ENCODE measurements at regions of chr6 and their contacts with region 1.

Region 1: DNA sequence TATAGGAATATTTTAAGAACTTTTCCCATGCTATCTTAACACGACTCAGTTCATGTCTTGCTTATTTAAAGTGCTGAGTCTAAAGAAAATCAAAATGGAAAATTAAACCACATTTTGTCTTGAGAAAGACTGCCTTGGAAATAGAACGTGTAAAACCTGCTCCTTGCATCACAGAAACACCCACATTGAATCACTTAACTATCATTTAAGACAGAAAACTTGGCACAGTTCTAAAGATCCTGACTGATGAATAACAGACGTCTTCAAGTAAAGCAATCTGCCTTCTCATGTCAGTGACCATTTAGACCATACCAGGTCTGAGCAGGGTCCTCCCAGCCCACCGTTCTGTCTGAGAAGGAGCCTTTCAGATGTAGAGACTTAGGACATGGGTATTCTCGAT is 7.4 kb downstream of the PERP start:
- DNase-seq: no peak

Region 2: DNA sequence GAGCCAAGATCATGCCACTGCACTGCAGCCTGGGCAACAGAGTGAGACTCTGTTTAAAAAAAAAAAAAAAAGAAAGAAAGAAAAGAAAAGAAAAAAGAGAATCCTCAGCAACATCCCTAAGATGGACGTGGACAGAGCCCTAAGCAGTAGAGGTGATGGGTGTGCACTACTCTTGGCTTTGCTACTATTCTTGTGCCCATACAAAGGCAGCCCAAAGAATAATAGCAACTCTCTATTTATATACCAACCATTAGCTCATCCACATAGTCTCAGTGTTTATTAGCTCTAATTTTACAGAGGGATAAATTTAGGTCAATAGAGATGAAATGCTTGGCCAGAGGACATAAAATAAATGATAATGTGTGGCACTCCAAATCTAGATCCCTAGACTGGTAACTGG is 54.9 kb before region 1 on chr6:
- intact Hi-C with region 1: loop called (anchors 5 kb)
- DNase-seq: no peak

Measured in cardiac septum (tissue), 1 donor.